K562 (cell line): ENCODE measurements at regions of chr20 and their contacts with region 1.

Region 1: DNA sequence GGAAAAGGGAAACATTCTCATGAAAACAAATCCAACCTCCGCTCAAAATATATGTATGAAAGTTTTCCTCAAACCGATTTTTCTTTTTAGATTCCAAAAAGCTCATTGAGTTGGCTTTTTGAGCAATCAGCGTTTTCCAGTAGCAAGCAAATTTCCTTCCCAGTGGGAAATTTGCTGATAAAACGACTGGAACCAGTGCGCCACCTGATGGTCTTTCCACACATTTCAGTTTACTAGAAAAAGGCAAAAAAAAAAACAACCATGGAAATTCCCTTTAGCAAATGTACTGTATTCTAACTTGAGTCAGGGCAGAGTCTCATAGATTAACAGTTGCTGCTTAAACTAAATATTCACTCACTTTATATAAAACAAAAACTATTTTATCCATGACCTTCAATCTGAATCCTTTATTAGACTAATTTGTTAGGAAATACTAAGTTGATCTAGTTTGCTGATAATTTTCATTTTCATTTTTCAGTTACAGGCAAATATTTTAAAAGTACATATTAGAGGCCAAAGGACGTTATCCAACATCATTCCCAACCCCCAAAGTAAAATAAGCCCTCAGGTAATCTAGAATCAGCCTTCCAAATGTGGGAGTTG is 271.5 kb downstream of the FOXA2 start:
- DNase-seq: peak; percentile 14 to 32 (median 17)
- ATAC-seq: no peak
- H3K4me3 ChIP-seq: no peak overlapping the region
- H3K27ac ChIP-seq: no peak overlapping the region
- H3K4me1 ChIP-seq: no peaks in the 10 kb centered on the region
- H3K27me3 ChIP-seq: no peaks in the 10 kb centered on the region
- CTCF ChIP-seq: peak; percentile 39 to 65 (median 46); a peak in 4 of 6 replicates
- EP300 ChIP-seq: no peak
- POLR2A ChIP-seq: no peak
- RAD21 ChIP-seq: peak; percentile 26 to 44; a peak in 2 of 4 replicates

Region 2: DNA sequence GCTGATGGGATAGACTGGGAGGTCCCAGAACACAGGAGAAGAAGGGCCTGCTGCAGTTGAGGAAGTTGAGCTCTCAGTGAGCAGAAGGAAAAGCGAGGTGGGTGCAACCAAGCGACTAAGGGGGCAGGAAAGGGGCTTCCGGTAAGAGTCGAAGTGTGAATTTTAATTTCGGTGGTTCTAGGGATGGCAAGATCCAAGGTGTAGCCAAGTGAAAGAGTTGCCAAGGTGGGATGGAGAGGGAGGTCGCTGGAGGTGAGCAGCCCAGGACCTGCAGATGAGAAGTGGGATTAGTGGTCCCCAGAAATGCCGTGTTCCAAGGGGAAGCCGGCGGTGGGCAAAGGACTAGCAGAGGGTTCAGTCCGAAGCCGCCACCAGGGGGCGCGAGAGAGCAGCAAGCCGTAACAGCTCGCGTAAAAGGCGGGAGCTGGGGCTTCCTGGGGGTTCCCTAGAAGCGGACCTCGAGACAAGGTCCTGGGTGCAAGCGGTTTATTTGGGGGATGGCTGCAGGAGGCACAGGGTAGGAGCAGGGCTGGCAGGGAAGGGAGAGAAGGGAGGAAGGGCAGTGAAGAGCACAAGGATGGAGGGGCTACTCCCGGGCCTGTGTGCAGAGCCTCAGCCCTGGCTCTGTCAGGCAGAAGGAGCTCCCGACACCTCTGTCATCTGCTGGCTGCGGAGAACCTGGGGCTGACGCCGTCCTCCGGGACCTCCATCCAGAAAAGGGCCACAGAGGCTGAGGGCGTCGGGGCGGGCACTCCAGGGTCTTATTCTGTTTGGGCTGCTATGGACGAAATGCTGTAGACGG is 503.8 kb before region 1 on chr20:
- CTCF ChIA-PET with region 1: interaction called, 4 read pairs
- POLR2A ChIA-PET with region 1: no interaction called
- in situ Hi-C with region 1: no loop called
- intact Hi-C with region 1: loop called (anchors 5 kb)
- DNase-seq: peak; percentile 55 to 73 (median 72)
- ATAC-seq: peak; percentile 90
- H3K4me3 ChIP-seq: no peak overlapping the region
- H3K27ac ChIP-seq: no peak overlapping the region
- H3K4me1 ChIP-seq: peaks cover 0 to 6% of the 10 kb centered on the region in 2 experiments; a peak in 1 of 5 replicates
- H3K27me3 ChIP-seq: peaks cover 0 to 10% of the 10 kb centered on the region in 2 experiments; a peak in 1 of 5 replicates
- CTCF ChIP-seq: peak; percentile 58 to 69 (median 65)
- EP300 ChIP-seq: no peak
- POLR2A ChIP-seq: no peak
- RAD21 ChIP-seq: peak; percentile 13 to 50; a peak in 2 of 4 replicates